Ascending aorta (tissue), 2 donors: ENCODE measurements at regions of chr1 and their contacts with region 1.

Region 1: GRCh38 chr1:227787513-227788270 is 27.8 kb upstream of the PRSS38 start:
- DNase-seq: peak; percentile 85 to 96
- H3K4me3 ChIP-seq: peak overlapping the region; percentile 65 to 75
- H3K27ac ChIP-seq: peak overlapping the region; percentile 69 to 72
- H3K4me1 ChIP-seq: peaks cover 3 to 14% of the 10 kb centered on the region in 2 donors
- H3K27me3 ChIP-seq: no peaks in the 10 kb centered on the region
- CTCF ChIP-seq: no peak

Region 2: DNA sequence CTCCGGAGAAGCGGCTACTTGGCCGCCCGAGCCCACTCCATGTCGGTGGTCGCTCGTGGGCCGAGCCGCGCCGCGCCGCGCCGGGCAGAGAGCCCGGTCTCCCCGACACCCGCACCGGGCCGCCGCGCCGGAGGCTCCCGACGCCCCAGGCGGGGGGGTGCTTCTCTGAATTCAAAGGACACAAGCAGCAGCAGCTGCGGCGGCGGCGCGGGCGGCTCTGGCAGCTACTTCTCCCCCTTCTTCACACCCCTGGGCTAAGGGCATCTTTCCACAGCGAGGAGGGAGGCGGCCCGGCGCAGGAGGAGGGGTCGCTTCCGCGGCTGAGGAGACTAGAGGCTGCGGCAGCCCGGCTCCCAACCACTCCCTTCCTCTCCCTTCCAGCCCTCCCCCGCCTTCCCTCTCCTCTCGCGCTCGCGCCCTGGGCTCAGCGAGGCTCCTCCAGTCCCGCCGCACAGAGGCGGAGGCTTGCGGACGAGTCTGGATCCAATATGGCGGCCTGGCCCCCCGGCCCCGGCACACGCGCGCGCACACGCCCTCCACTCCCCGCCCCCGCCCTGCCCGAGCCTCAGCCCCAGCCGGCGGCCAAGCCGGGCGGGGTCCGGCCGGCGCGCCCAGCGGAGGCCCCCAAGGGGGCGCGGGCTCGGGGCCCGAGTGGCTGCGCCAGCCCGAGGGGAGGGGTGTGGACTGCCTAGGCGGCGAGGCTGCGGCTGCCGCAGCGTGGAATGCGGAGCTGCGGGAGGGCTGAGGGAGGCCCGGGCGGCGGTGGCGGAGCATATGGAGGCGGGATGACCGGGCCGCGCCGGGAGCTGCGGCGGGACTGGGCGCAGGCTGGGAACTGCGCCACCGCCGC is 469.5 kb before region 1 on chr1 and contains the start of gene CDC42BPA:
- intact Hi-C with region 1: loop called (anchors 5 kb)
- DNase-seq: peak; percentile 16 to 89
- H3K4me3 ChIP-seq: peak within 1 kb of the TSS; percentile 95 to 97
- H3K27ac ChIP-seq: peak within 1 kb of the TSS; percentile 92 to 99
- H3K4me1 ChIP-seq: peaks cover 0 to 3% of the 10 kb centered on the region in 2 donors
- H3K27me3 ChIP-seq: no peaks in the 10 kb centered on the region
- CTCF ChIP-seq: no peak
- total RNA-seq, gene CDC42BPA: 56.9 TPM

Region 3: GRCh38 chr1:227541556-227542142 is 246.0 kb before region 1 on chr1:
- intact Hi-C with region 1: no loop called
- DNase-seq: no peak
- H3K4me3 ChIP-seq: peak overlapping the region; percentile 93 to 98
- H3K27ac ChIP-seq: peak overlapping the region; percentile 79 to 85
- H3K4me1 ChIP-seq: peaks cover 4 to 8% of the 10 kb centered on the region in 2 donors
- H3K27me3 ChIP-seq: no peaks in the 10 kb centered on the region
- CTCF ChIP-seq: no peak

Region 4: DNA sequence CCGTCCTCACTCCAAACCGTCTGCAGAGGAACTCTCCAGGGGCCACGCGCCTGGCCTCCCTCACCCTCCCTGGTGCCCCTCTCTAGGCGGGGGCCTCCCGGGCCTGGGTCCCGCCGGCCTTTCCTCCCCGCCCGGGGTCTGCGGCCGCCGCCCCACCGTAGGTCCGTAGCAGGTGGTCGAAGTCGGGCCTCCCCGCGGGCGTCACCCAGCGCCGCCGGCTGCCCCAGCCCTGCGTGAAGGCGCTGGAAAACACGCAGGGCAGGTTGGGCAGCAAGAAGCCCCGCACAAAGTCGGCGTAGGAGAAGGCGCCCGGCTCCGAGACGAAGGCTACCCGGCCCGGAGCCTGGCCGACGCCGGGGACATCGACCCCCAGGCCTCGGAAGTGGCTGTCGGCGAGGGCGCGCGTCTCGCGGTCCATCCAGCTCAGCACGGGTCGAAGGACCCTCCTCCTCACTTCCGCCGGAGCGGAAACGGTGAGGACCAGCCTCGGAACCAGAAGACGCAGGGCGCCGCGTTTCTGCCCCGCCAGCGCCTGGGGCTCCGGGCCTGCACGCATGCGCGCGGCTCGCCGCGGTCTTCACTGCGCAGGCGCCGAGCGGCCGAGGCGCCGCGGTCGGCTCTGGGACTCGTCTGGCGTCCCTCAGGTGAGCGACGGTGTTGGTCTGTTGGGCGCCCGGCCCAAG is 52.7 kb before region 1 on chr1 and contains the starts of genes JMJD4 and SNAP47:
- intact Hi-C with region 1: loop called (anchors 1 kb)
- DNase-seq: peak in 1 of 2 donors; percentile 95
- H3K4me3 ChIP-seq: peak within 1 kb of the TSS; percentile 81 to 93
- H3K27ac ChIP-seq: peak within 1 kb of the TSS; percentile 84 to 88
- H3K4me1 ChIP-seq: peaks cover 0 to 9% of the 10 kb centered on the region in 2 donors
- H3K27me3 ChIP-seq: no peaks in the 10 kb centered on the region
- CTCF ChIP-seq: no peak
- total RNA-seq, gene JMJD4: 10.6 TPM
- total RNA-seq, gene SNAP47: 54.0 TPM

Region 5: DNA sequence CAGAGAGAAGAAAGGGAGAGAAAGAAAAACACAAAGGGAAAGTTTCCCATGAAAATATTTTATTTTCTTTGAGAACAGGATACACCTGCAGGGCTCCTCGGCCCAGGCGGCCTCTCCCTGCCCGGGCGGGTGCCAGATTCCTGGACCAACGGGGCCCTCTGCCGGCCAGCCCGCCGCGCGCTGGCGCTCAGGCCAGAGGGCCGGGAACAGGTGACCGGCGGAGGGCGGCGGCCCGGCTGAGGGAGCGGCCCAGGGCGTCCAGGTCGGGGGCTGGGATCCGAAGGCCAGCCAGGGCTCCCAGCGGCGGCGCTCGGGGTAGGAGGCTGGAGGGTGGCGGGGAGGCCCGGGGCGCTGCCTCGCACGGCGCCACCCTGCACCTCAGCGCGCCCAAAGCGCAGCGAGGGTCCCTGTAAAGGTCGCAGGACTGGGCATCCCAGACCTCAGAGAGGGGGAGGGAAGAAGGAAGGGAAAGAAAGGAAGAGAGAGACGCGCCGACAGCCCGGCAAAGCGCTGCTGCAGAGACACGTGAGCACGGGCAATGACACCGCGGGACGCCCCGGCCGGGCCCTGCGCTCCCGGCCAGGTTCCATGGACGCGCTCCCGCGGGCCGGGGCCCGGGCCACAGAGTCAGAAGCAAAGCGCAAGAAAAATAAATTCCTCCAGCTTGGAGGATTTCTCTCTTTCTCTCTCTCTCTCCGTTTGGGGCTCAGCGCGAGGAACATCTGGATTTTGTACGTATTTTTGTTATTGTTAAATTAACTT is 159.1 kb after region 1 on chr1:
- intact Hi-C with region 1: loop called (anchors 2 kb)
- DNase-seq: peak in 1 of 2 donors; percentile 70
- H3K4me3 ChIP-seq: peak overlapping the region; percentile 61 to 73
- H3K27ac ChIP-seq: peak overlapping the region in 1 of 2 donors; percentile 31
- H3K4me1 ChIP-seq: peaks cover 4 to 17% of the 10 kb centered on the region in 2 donors
- H3K27me3 ChIP-seq: no peaks in the 10 kb centered on the region
- CTCF ChIP-seq: peak; percentile 40 to 67 (median 64)

Region 6: DNA sequence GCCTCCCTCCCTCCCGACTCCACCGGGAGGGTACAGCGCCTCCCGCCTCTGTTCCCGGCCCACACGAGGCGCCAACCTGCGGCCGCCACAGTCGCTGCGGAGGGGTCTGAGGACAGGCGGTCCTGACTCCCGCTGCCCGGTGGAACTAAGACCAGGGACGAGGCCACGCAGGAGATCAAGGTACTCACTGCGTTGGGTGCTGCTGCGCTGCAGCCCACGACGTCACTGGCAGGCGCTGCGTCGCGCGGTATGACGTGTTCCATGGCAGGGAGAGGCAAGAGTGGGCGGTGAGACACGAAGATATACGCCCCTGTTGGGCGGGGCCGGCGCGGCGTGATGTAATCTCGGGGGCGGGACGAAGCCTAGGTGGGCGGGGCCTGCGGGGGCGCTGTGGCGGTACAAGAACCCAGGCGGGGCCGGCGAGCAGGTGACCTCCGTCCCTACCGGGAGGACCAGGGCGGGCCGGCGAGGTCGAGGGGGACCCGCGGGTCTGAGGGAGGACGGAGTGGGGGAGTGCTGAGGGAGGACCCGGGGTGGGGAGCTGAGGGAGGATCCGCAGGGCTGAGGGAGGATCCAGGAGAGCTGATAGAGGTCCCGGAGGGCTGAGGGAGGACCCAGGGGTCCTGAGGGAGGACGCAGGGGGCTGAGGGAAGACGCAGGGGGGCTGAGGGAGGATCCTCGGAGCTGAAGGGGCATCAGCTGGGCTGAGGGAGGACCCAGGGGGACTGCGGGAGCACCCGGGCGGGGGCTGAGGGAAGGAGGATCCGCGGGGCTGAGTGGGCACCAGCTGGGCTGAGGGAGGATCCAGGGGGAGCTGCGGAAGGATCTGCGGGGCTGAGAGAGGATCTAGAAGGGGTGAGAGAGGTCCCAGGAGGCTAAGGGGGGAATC is 321.6 kb after region 1 on chr1 and contains the start of gene MRPL55:
- intact Hi-C with region 1: loop called (anchors 2 kb)
- DNase-seq: peak; percentile 94 to 99
- H3K4me3 ChIP-seq: peak within 1 kb of the TSS; percentile 77 to 97
- H3K27ac ChIP-seq: peak within 1 kb of the TSS; percentile 88 to 89
- H3K4me1 ChIP-seq: peaks cover 14 to 18% of the 10 kb centered on the region in 2 donors
- H3K27me3 ChIP-seq: no peaks in the 10 kb centered on the region
- CTCF ChIP-seq: peak in 1 of 3 experiments; percentile 9
- total RNA-seq, gene MRPL55: 23.6 TPM